Naive thymus-derived CD4-positive, alpha-beta T cell (primary cell): ENCODE measurements at regions of chr1 and their contacts with region 1.

Region 1: GRCh38 chr1:205284343-205285144 is 37.0 kb downstream of the NUAK2 start:
- DNase-seq: peak; percentile 65 to 92 (median 89)
- ATAC-seq: peak; percentile 79
- H3K4me3 ChIP-seq: peak overlapping the region; percentile 51
- H3K4me3 Mint-ChIP-seq: peak overlapping the region; percentile 63 to 89 (median 80)
- H3K27ac ChIP-seq: peak overlapping the region; percentile 83
- H3K27ac Mint-ChIP-seq: peak overlapping the region; percentile 90 to 99 (median 97)
- H3K4me1 ChIP-seq: peaks cover 61 to 78% of the 10 kb centered on the region in 2 donors
- H3K4me1 Mint-ChIP-seq: peaks cover 67 to 95% (median 80%) of the 10 kb centered on the region in 7 donors
- H3K27me3 ChIP-seq: no peaks in the 10 kb centered on the region
- H3K27me3 Mint-ChIP-seq: peaks cover 0 to 20% (median 0%) of the 10 kb centered on the region in 5 donors

Region 2: DNA sequence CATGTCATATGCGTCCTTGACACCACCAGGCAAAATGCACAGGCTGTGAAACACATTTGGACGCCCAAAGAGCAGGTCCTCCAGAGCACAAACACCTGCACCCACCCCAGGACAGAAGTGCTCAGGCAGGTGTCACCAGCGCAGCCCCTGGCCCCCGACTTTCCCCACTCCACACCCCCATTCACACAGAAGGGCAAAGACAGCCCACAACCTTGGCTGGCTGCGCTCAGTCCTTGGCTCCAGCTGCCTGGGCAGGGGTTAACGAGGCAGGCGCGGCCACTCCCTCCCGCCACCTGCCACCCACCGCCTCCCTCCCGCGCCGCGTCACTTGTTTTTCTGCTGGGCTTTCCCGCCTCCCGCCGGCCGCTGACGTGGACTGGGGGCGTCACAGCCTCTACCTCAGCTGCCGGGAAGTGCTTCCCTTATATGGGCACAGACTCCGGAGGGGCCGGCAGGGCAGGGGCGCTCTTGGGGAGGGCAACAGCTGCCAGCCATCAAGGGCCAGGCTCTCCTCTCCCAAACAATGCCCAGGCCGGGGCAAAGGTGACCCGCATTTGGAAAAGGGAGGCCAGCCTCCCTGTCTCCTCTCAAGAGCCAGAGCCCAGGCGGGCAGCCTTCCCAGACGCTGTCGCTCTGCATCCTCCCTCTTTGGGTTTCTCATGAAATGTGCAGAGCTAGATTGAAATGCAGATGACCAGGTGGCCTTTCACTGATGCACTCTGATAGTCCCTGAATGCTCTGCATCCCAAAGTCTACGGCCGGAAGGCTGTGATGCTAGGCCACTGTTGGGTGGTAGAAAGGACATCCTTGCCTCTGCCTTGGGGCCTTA is 1994.1 kb before region 1 on chr1:
- CTCF ChIA-PET with region 1: no interaction called
- POLR2A ChIA-PET with region 1: no interaction called
- intact Hi-C with region 1: loop called in 1 of 2 experiments (anchors 10 kb)
- DNase-seq: peak; percentile 95 to 98 (median 97)
- ATAC-seq: peak; percentile 76
- H3K4me3 ChIP-seq: peak overlapping the region; percentile 57
- H3K4me3 Mint-ChIP-seq: peak overlapping the region; percentile 75 to 89 (median 86)
- H3K27ac ChIP-seq: peak overlapping the region; percentile 98
- H3K27ac Mint-ChIP-seq: peak overlapping the region; percentile 97 to 100 (median 99)
- H3K4me1 ChIP-seq: peaks cover 54 to 58% of the 10 kb centered on the region in 2 donors
- H3K4me1 Mint-ChIP-seq: peaks cover 44 to 92% (median 86%) of the 10 kb centered on the region in 7 donors
- H3K27me3 ChIP-seq: no peaks in the 10 kb centered on the region
- H3K27me3 Mint-ChIP-seq: peaks cover 0 to 3% (median 0%) of the 10 kb centered on the region in 5 donors

Region 3: GRCh38 chr1:204506961-204507387 is 777.6 kb before region 1 on chr1:
- CTCF ChIA-PET with region 1: no interaction called
- POLR2A ChIA-PET with region 1: no interaction called
- intact Hi-C with region 1: loop called in 1 of 2 experiments (anchors 5 kb)
- DNase-seq: peak; percentile 57 to 96 (median 93)
- ATAC-seq: peak; percentile 83
- H3K4me3 ChIP-seq: peak overlapping the region; percentile 66
- H3K4me3 Mint-ChIP-seq: peak overlapping the region; percentile 81 to 98 (median 94)
- H3K27ac ChIP-seq: peak overlapping the region; percentile 90
- H3K27ac Mint-ChIP-seq: peak overlapping the region; percentile 95 to 100 (median 99)
- H3K4me1 ChIP-seq: peaks cover 11 to 20% of the 10 kb centered on the region in 2 donors
- H3K4me1 Mint-ChIP-seq: peaks cover 19 to 57% (median 44%) of the 10 kb centered on the region in 7 donors
- H3K27me3 ChIP-seq: no peaks in the 10 kb centered on the region
- H3K27me3 Mint-ChIP-seq: peaks cover 0 to 6% (median 4%) of the 10 kb centered on the region in 5 donors

Region 4: GRCh38 chr1:205300886-205301821 is 16.6 kb after region 1 on chr1:
- CTCF ChIA-PET with region 1: interaction called, 5 read pairs
- POLR2A ChIA-PET with region 1: interaction called, 82 read pairs
- intact Hi-C with region 1: loop called in 1 of 2 experiments (anchors 1 kb)
- DNase-seq: no peak
- ATAC-seq: no peak
- H3K4me3 ChIP-seq: no peak overlapping the region
- H3K4me3 Mint-ChIP-seq: no peak overlapping the region
- H3K27ac ChIP-seq: no peak overlapping the region
- H3K27ac Mint-ChIP-seq: peak overlapping the region in 8 of 9 donors; percentile 25 to 84 (median 75)
- H3K4me1 ChIP-seq: peaks cover 3 to 7% of the 10 kb centered on the region in 2 donors
- H3K4me1 Mint-ChIP-seq: peaks cover 30 to 73% (median 57%) of the 10 kb centered on the region in 7 donors
- H3K27me3 ChIP-seq: no peaks in the 10 kb centered on the region
- H3K27me3 Mint-ChIP-seq: peaks cover 0 to 2% (median 0%) of the 10 kb centered on the region in 5 donors

Region 5: DNA sequence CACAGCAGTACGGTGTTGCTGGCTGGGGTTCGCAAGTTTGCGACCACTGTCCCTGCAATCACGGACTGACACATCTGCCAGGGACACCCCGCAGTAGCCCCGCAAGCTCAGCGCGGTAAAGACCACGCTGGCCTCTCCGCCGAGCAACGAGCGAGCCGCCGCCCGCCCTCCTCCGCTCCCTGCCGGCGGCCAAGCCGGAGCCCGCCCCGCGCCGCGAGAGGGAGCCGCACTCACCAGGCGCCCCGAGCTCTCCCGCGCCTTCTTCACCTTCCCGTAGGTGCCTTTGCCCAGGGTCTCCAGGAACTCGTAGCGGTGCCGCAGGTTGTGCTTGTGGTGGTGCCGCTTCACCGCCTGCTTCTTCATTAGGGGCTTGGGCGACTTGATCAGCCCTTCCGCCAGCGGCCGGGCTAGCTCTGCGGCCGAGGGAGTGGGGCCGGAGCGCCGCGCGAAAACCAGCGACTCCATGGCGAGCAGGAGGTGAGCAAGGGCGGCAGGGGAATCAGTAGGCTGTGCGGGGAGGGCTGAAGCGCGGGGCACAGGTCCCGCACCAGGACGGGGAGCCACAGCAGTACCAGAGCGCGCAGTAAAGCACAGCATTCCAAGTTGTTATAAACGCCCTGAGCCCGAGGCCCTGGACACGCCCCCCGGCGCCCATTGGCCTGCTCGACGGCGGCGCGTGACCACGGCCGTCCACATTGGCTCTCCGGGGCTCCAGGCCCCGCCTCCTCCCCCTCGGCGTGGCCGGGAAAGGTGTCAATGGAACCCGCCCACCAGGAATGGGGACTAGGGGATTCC is 36.8 kb after region 1 on chr1 and contains the start of gene NUAK2:
- CTCF ChIA-PET with region 1: interaction called, 955 read pairs
- POLR2A ChIA-PET with region 1: interaction called, 1,119 read pairs
- intact Hi-C with region 1: loop called (anchors 1 kb)
- DNase-seq: peak; percentile 78 to 87 (median 84)
- ATAC-seq: peak; percentile 94
- H3K4me3 ChIP-seq: peak within 1 kb of the TSS; percentile 95
- H3K4me3 Mint-ChIP-seq: peak within 1 kb of the TSS; percentile 91 to 100 (median 98)
- H3K27ac ChIP-seq: peak within 1 kb of the TSS; percentile 89
- H3K27ac Mint-ChIP-seq: peak within 1 kb of the TSS; percentile 86 to 99 (median 94)
- H3K4me1 ChIP-seq: peaks cover 42 to 49% of the 10 kb centered on the region in 2 donors
- H3K4me1 Mint-ChIP-seq: peaks cover 42 to 69% (median 64%) of the 10 kb centered on the region in 7 donors
- H3K27me3 ChIP-seq: no peaks in the 10 kb centered on the region
- H3K27me3 Mint-ChIP-seq: peaks cover 0 to 21% (median 0%) of the 10 kb centered on the region in 5 donors
- total RNA-seq, gene NUAK2: 9.1 to 57.8 (median 23.0) TPM

Region 6: DNA sequence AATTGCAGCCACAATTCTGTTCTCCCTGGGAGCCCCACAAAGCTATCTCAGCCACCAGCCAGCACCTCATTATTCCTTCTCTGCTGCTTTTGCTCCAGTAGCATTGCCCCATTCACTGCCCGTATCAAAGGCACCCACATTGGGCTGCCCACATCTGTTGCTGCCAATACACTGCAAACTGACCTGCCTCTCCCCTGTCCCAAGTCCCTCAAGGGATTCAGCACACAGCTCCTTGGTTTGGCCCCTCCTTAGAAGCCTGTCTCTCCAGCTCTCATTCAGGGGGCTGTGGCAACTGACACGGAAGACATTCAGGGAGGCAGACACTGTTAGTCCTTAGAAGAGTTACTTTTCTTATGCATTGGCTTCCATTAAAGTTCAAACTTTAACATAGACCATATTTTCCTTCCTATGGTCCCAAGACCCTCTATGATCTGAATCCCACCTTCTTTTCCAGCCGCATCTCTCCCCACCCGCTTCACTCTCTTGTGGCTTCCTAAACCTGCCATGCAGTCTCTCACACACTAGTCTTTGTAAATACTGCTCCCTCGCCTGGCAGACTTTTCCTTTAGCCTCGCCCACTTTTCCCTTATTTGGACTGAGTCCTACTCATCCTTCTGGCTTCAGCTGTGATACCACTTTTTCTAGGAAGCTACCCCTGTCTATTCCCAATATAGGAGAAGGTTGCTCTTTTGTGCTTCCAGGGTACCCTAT is 91.4 kb after region 1 on chr1:
- CTCF ChIA-PET with region 1: no interaction called
- POLR2A ChIA-PET with region 1: no interaction called
- intact Hi-C with region 1: no loop called
- DNase-seq: no peak
- ATAC-seq: no peak
- H3K4me3 ChIP-seq: no peak overlapping the region
- H3K4me3 Mint-ChIP-seq: no peak overlapping the region
- H3K27ac ChIP-seq: no peak overlapping the region
- H3K27ac Mint-ChIP-seq: peak overlapping the region in 1 of 9 donors; percentile 3
- H3K4me1 ChIP-seq: peaks cover 6 to 13% of the 10 kb centered on the region in 2 donors
- H3K4me1 Mint-ChIP-seq: peaks cover 9 to 26% (median 20%) of the 10 kb centered on the region in 7 donors
- H3K27me3 ChIP-seq: no peaks in the 10 kb centered on the region
- H3K27me3 Mint-ChIP-seq: peaks cover 0 to 46% (median 22%) of the 10 kb centered on the region in 5 donors

Region 7: GRCh38 chr1:205775015-205775716 is 490.6 kb after region 1 on chr1 and contains the start of gene RAB29:
- CTCF ChIA-PET with region 1: no interaction called
- POLR2A ChIA-PET with region 1: interaction called, 3 read pairs
- intact Hi-C with region 1: loop called in 1 of 2 experiments (anchors 2 kb)
- DNase-seq: peak; percentile 67 to 92 (median 86)
- ATAC-seq: peak; percentile 92
- H3K4me3 ChIP-seq: peak within 1 kb of the TSS; percentile 81
- H3K4me3 Mint-ChIP-seq: peak within 1 kb of the TSS; percentile 88 to 100 (median 96)
- H3K27ac ChIP-seq: peak within 1 kb of the TSS; percentile 98
- H3K27ac Mint-ChIP-seq: peak within 1 kb of the TSS; percentile 96 to 100 (median 98)
- H3K4me1 ChIP-seq: peaks cover 17 to 24% of the 10 kb centered on the region in 2 donors
- H3K4me1 Mint-ChIP-seq: peaks cover 33 to 67% (median 60%) of the 10 kb centered on the region in 7 donors
- H3K27me3 ChIP-seq: no peaks in the 10 kb centered on the region
- H3K27me3 Mint-ChIP-seq: peaks cover 0 to 2% (median 0%) of the 10 kb centered on the region in 5 donors
- total RNA-seq, gene RAB29: 23.9 to 55.5 (median 45.9) TPM